Sigmoid colon (tissue), 7 donors: ENCODE measurements at regions of chr1 and their contacts with region 1.

Region 1: DNA sequence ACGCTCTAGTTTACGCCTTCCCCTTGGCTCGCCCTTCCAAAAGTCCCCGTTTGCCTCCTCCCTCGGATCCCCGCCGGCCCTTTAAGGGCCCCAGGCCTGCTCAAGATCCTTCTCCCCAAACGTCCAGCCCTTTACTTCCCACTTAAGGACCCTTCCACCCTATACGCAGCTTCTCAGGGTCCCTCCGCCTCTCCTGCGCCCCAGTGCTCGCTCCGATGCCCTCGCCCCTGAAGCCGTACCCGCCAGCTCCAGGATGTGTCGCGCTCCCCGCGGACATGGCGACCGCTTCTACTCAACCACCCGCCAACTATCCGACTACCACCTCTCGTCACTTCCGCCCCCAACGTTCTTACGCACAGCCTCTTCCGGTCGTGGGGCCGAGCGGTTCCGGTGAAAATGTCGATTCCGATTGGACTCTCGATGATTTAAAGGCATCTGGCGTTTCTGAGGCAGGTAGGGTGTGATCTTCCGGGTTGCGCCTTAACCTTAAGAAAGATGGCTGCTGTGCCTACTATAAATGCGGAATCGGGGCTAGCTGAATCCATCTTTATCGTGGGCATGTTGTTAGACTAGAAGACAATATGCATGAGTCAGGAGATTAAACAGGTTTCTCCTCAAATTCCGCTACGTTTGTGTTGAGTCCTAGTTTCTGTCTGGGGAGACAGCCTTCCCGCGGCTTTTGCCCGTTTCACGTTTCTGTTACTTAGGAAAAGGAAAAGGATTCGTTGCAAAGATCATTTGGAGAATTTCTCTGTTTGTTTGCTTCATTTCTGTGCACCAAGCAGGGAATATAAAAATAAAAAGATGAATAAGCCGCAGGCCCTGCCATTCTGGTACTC is at the start of gene KHDC4:
- DNase-seq: peak; percentile 99
- H3K4me3 ChIP-seq: peak within 1 kb of the TSS; percentile 73 to 87 (median 80)
- H3K27ac ChIP-seq: peak within 1 kb of the TSS; percentile 87 to 94 (median 89)
- H3K4me1 ChIP-seq: peaks cover 0 to 52% (median 47%) of the 10 kb centered on the region in 4 donors
- H3K27me3 ChIP-seq: no peaks in the 10 kb centered on the region
- CTCF ChIP-seq: peak in 1 of 4 experiments; percentile 11
- EP300 ChIP-seq: no peak
- POLR2A ChIP-seq: peak; percentile 98 to 99
- total RNA-seq, gene KHDC4: 33.5 to 67.6 (median 38.9) TPM

Region 2: GRCh38 chr1:155847823-155848529 is 86.3 kb before region 1 on chr1:
- intact Hi-C with region 1: no loop called
- DNase-seq: no peak
- H3K4me3 ChIP-seq: no peak overlapping the region
- H3K27ac ChIP-seq: no peak overlapping the region
- H3K4me1 ChIP-seq: peaks cover 0 to 5% (median 4%) of the 10 kb centered on the region in 4 donors
- H3K27me3 ChIP-seq: no peaks in the 10 kb centered on the region
- CTCF ChIP-seq: no peak
- EP300 ChIP-seq: no peak
- POLR2A ChIP-seq: no peak

Region 3: DNA sequence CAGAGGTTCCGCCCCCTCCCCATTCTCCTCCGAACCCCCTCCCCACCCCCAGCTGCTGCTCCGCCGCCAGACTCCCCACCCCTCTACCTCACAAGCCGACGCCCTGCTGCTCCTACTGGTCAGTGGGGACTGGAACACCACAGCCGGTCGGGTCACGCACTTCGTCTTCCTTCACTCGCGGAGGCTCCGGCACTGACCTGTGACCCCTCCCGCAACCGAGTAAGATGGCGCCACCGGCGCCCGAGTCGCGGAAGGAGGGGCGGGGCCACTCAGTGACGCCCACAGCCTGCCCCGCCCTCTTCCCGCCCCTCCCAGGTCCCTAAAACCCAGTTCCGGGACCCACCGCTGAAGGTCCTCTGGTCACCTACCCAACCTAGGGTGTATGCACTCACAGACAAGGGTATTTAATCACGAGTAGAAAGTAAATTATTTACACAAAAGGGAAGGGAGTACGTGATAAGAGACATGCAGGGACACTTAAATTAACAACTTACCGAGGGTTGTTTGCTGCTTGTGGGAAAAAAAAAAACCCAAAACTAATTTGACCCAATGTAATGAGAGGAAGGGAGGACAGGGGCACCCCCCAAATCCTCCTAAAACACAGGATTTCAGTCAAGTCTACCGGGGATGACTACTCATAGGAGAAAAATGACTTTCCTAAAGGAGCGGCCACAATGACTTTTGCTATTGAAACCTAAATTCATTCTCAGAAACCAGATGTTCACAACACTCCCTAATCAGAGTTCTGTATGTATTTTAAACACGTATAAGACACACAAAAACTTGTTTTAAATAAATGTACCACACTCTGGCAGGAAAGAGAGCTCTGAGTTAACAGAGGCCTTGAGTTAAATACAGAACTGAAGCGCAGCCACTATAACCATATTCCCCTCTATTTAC is 22.9 kb before region 1 on chr1 and contains the start of gene RIT1:
- intact Hi-C with region 1: loop called (anchors 2 kb)
- DNase-seq: peak; percentile 95
- H3K4me3 ChIP-seq: peak within 1 kb of the TSS; percentile 67 to 88 (median 79)
- H3K27ac ChIP-seq: peak within 1 kb of the TSS; percentile 91 to 96 (median 92)
- H3K4me1 ChIP-seq: peaks cover 0 to 22% (median 18%) of the 10 kb centered on the region in 4 donors
- H3K27me3 ChIP-seq: no peaks in the 10 kb centered on the region
- CTCF ChIP-seq: peak in 3 of 4 experiments; percentile 18 to 31 (median 18)
- EP300 ChIP-seq: no peak
- POLR2A ChIP-seq: peak; percentile 36 to 50
- total RNA-seq, gene RIT1: 16.6 to 23.2 (median 20.7) TPM

Region 4: GRCh38 chr1:155989242-155990004 is 55.1 kb after region 1 on chr1:
- intact Hi-C with region 1: loop called (anchors 1 kb)
- DNase-seq: peak; percentile 90
- H3K4me3 ChIP-seq: peak overlapping the region; percentile 13 to 48 (median 38)
- H3K27ac ChIP-seq: peak overlapping the region; percentile 37 to 68 (median 51)
- H3K4me1 ChIP-seq: peaks cover 0 to 12% (median 7%) of the 10 kb centered on the region in 4 donors
- H3K27me3 ChIP-seq: no peaks in the 10 kb centered on the region
- CTCF ChIP-seq: peak; percentile 97 to 100 (median 98)
- EP300 ChIP-seq: no peak
- POLR2A ChIP-seq: no peak